ENCODE measurements at regions of chr1 and their contacts with region 1.

Region 1: GRCh38 chr1:53393325-53393792 is 65.5 kb upstream of the LRP8 start:
- DNase-seq: peak; percentile 81 to 94
- ATAC-seq: peak; percentile 88
- H3K4me3 ChIP-seq: no peak overlapping the region
- H3K27ac ChIP-seq: no peak overlapping the region
- H3K4me1 ChIP-seq: no peaks in the 10 kb centered on the region
- H3K27me3 ChIP-seq: no peaks in the 10 kb centered on the region

Region 2: DNA sequence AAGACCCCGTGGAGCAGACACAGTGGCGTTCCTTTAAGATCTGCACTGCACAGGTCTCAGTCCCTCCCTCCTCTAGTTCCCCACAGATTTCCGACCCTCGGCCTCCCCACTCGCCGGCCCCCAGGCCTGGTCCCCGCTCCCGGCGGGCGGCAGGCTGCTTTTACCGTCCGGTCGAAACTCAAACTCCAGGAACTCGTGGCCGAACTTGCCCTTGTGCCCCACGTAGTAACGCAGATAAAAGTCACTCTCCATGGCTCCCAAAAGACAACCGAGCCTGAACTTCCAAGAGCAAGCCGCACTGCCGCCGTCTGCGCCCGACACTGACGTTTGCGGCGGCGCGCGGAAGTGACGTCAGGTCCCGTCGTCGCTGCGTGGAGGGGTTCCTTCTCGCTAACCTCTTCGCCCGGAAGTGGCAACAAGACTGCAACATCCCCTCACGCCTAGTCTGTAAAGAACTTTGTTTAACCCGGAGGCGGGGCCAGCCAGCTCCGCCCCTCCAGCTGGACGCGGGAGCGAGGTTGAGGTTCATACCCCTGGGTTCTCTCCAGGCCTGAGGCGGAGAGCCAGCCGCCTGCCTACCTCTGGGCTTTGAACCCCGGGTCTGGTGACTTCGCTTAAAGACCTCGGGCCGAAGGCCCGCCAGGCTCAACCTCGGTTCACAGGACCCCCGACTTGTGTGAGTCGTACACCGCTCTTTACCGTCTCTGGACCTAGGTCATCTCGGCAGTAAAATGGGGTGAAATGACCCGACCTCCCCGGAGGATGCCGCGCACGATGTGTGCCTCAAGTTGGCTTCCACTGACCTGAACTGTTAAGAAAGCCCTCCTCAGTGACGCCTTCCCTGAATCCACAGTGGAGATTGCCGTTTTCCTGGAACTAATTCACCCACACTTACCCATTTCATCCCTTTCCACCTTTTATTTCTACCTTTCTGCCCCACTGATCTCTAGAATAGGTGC is 154.9 kb before region 1 on chr1 and contains the start of gene MAGOH:
- intact Hi-C with region 1: no loop called
- DNase-seq: peak; percentile 96 to 98
- ATAC-seq: peak; percentile 96
- H3K4me3 ChIP-seq: peak within 1 kb of the TSS; percentile 82 to 86
- H3K27ac ChIP-seq: no peak within 1 kb of the TSS
- H3K4me1 ChIP-seq: peaks cover 0 to 3% of the 10 kb centered on the region in 2 donors
- H3K27me3 ChIP-seq: no peaks in the 10 kb centered on the region
- total RNA-seq, gene MAGOH: 26.7 to 32.0 TPM

Region 3: GRCh38 chr1:53278201-53278725 is 115.1 kb before region 1 on chr1:
- intact Hi-C with region 1: loop called (anchors 1 kb)
- DNase-seq: peak; percentile 72 to 86
- ATAC-seq: no peak
- H3K4me3 ChIP-seq: no peak overlapping the region
- H3K27ac ChIP-seq: no peak overlapping the region
- H3K4me1 ChIP-seq: no peaks in the 10 kb centered on the region
- H3K27me3 ChIP-seq: no peaks in the 10 kb centered on the region

Measured in aorta (tissue), 5 donors.